Sigmoid colon (tissue), 7 donors: ENCODE measurements at regions of chr19 and their contacts with region 1.

Region 1: GRCh38 chr19:19663256-19664038 is at the start of gene ATP13A1:
- DNase-seq: peak; percentile 98
- H3K4me3 ChIP-seq: peak within 1 kb of the TSS; percentile 71 to 97 (median 89)
- H3K27ac ChIP-seq: peak within 1 kb of the TSS; percentile 87 to 92 (median 91)
- H3K4me1 ChIP-seq: peaks cover 0 to 33% (median 27%) of the 10 kb centered on the region in 4 donors
- H3K27me3 ChIP-seq: no peaks in the 10 kb centered on the region
- CTCF ChIP-seq: no peak
- EP300 ChIP-seq: no peak
- POLR2A ChIP-seq: peak; percentile 31 to 40
- total RNA-seq, gene ATP13A1: 55.5 to 145 (median 102) TPM

Region 2: DNA sequence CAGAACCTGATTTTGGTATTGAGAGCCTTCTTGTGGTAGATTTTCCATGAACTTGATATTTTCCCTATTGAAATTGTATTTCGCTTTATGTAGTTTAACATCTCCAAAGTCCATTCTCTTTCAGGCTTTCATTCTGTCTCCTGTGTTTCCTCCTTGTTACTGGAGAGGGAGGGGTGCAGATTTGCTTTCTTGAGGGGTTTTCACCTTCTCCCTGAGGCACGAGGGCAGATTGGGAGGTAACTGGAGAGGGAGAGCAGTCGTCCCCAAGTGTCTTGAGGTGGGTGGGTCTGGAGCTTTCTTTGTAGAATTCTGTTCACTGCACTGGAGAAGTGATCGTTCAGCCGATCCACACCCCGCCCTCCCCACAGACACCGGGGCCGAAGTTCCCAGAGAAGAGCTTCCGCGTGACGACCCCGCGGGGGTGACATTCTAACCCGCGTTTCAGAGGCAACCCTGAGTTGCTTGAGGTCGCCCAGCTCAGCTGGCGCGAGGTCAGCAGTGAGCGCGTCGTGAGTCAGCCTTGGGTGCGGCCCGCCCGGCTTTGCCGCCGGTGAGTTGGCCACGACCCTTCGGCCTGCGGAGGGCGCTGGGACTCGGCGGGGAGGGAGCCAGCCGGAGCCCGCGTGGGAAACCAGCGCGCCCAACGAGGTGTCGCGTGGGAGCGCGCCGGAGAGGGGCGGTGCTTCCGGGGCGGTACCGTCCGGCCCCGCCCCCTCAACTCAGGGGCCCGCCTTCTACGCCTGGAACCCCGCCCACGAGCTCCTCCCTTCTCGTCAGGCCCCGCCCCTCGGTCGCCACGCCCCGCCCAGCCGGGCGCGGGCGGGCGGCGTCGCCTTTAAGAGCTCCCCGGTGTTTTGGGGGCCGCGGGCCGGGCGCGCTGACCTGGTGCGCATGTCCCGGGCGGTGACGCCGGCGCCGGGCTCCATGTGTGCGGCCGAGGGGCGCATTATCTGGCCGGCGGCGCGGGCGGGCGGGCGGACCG is 258.3 kb before region 1 on chr19 and contains the start of gene GATAD2A:
- intact Hi-C with region 1: loop called (anchors 10 kb)
- DNase-seq: peak; percentile 97
- H3K4me3 ChIP-seq: peak within 1 kb of the TSS; percentile 88 to 99 (median 98)
- H3K27ac ChIP-seq: peak within 1 kb of the TSS; percentile 86 to 93 (median 89)
- H3K4me1 ChIP-seq: peaks cover 0 to 51% (median 38%) of the 10 kb centered on the region in 4 donors
- H3K27me3 ChIP-seq: no peaks in the 10 kb centered on the region
- CTCF ChIP-seq: peak in 2 of 4 experiments; percentile 10 to 18
- EP300 ChIP-seq: no peak
- POLR2A ChIP-seq: no peak
- total RNA-seq, gene GATAD2A: 18.5 to 138 (median 25.5) TPM

Region 3: DNA sequence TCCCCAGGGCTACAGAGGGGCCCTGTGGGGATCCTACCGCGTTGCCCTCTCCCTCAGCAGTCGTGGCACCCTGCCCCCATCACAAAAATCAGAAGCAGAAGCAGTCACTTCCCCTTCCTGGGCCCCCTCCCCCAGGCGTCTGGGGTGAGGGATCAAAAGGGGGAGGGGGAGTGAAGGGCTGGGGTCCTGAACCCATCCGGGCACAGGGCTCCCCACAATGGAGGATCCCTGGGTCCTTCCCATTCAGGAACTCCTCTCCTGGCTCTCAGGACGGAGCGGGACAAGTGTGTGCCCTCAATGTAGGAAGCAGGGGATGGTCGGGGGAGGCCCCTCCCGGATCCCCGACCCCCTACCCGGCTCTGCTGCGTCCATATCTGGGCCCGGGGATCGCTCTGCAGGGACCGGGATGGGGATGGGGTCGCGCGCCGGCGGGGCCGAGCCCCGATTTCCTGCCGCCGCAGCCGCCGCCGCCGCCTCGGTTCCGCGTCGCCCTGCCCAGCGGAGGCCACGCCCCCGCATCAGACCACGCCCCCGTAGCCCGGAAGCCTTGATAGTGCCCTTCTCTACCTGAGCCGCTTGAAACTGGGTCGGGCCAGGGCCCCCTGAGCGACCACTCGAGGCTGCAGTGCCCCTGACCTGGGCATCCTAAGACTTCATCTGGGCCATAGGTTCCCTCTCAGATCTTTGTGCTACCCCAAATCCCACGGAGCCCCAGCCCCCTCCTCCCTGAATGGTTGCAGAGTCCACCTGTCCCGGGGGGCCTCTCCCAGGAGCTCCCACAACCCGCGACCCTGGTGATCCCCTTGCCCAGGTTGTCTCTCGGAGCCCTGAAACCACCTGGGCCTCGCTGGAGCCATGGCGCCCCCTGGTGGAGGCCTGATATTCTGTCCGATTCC is 20.0 kb before region 1 on chr19 and contains the start of gene GMIP:
- intact Hi-C with region 1: no loop called
- DNase-seq: peak; percentile 84
- H3K4me3 ChIP-seq: peak within 1 kb of the TSS; percentile 49 to 82 (median 71)
- H3K27ac ChIP-seq: peak within 1 kb of the TSS; percentile 19 to 73 (median 54)
- H3K4me1 ChIP-seq: peaks cover 0 to 18% (median 10%) of the 10 kb centered on the region in 4 donors
- H3K27me3 ChIP-seq: no peaks in the 10 kb centered on the region
- CTCF ChIP-seq: peak; percentile 65 to 91 (median 86)
- EP300 ChIP-seq: no peak
- POLR2A ChIP-seq: no peak
- total RNA-seq, gene GMIP: 5.0 to 9.1 (median 6.4) TPM

Region 4: DNA sequence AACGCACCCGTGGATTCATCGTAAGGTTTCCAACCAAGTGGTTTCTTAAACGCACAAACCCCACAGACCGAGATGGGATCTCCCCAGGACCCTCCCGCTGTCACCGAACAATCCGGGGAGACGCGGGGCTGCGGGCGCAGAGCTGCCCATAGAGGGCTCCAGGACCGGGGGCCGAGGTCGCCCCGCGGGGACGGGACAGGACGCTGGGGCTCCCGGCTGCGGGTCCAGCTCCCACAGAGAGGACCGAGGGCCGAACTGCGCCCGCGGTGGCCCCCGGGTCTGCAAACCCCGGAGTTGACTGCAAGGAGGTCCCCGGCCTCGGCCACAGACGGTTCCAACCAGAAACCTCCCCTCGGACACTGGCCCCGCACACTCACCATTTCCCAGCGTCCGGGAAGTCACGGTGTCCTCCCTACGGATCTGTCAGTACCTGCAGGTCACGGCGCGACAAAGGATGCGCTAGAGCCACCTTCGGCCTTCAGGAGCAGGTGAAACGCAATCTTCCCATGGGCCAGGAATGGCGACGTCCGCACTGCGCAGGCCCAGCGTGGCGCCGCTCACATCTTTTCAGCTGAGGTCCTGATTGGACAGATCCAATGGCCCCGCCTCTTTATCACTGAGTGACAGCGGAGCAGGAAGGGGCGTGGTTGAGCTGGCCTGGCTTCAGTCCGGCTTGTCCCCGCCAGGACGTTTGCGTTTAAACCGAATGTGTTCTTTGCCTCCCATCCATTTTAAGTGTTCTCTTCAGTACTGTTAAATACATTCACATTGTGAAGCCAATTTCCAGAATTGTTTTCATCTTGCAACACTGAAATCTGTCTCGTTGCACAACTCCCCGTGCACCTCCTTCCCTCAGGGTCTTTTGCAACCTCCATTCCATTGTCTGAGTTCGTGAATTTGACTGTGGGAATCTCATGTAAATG is 69.4 kb after region 1 on chr19 and contains the start of gene ZNF14:
- intact Hi-C with region 1: loop called (anchors 5 kb)
- DNase-seq: peak; percentile 97
- H3K4me3 ChIP-seq: peak within 1 kb of the TSS; percentile 72 to 85 (median 80)
- H3K27ac ChIP-seq: peak within 1 kb of the TSS; percentile 74 to 80 (median 78)
- H3K4me1 ChIP-seq: peaks cover 0 to 12% (median 10%) of the 10 kb centered on the region in 4 donors
- H3K27me3 ChIP-seq: no peaks in the 10 kb centered on the region
- CTCF ChIP-seq: peak in 1 of 4 experiments; percentile 10
- EP300 ChIP-seq: no peak
- POLR2A ChIP-seq: peak; percentile 70 to 72
- total RNA-seq, gene ZNF14: 7.8 to 14.5 (median 9.5) TPM

Region 5: GRCh38 chr19:19821366-19821951 is 158.0 kb after region 1 on chr19 and contains the start of gene ZNF506:
- intact Hi-C with region 1: loop called (anchors 5 kb)
- DNase-seq: peak; percentile 100
- H3K4me3 ChIP-seq: peak within 1 kb of the TSS; percentile 54 to 79 (median 76)
- H3K27ac ChIP-seq: peak within 1 kb of the TSS; percentile 90 to 97 (median 92)
- H3K4me1 ChIP-seq: peaks cover 0 to 30% (median 12%) of the 10 kb centered on the region in 4 donors
- H3K27me3 ChIP-seq: no peaks in the 10 kb centered on the region
- CTCF ChIP-seq: no peak
- EP300 ChIP-seq: no peak
- POLR2A ChIP-seq: peak; percentile 89
- total RNA-seq, gene ZNF506: 21.9 to 45.7 (median 28.3) TPM

Region 6: DNA sequence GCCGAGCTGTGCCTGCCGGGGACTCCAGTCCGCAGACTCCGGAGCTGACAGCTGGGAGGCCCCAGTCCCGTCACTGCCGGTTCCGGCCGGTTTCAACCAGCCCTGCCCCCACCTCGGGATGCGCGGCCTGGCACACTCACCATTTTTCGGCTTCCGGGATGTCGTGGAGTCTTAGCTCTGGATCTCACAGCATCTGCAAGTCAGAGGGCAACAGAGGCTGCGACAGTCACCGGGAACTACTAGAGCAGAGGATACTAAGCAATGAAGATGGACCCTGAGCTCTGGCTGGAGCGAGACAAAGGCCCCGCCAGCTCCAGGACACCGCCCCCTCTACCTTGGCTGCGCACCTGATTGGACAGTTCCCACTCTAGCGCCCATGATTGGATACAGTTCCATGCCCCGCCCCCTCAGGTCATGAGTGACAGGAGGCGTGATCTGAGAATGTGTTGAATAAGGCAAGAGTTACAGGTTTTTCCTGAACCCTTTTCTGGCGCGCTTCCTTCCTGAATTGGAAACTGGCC is 375.8 kb after region 1 on chr19 and contains the start of gene ZNF682:
- intact Hi-C with region 1: loop called (anchors 5 kb)
- DNase-seq: peak; percentile 97
- H3K4me3 ChIP-seq: peak within 1 kb of the TSS; percentile 58 to 83 (median 70)
- H3K27ac ChIP-seq: peak within 1 kb of the TSS; percentile 65 to 83 (median 71)
- H3K4me1 ChIP-seq: peaks cover 0 to 12% (median 8%) of the 10 kb centered on the region in 4 donors
- H3K27me3 ChIP-seq: no peaks in the 10 kb centered on the region
- CTCF ChIP-seq: no peak
- EP300 ChIP-seq: peak in 1 of 4 donors; percentile 62
- POLR2A ChIP-seq: no peak
- total RNA-seq, gene ZNF682: 1.8 to 3.0 (median 2.1) TPM